Sigmoid colon (tissue), 7 donors: ENCODE measurements at regions of chr3 and their contacts with region 1.

Region 1: GRCh38 chr3:65439641-65440284 is 599.0 kb downstream of the MAGI1 start:
- DNase-seq: peak; percentile 71
- H3K4me3 ChIP-seq: no peak overlapping the region
- H3K27ac ChIP-seq: no peak overlapping the region
- H3K4me1 ChIP-seq: peaks cover 0 to 9% (median 4%) of the 10 kb centered on the region in 4 donors
- H3K27me3 ChIP-seq: no peaks in the 10 kb centered on the region
- CTCF ChIP-seq: peak; percentile 32 to 73 (median 54)
- EP300 ChIP-seq: no peak
- POLR2A ChIP-seq: no peak

Region 2: GRCh38 chr3:65672871-65673815 is 233.4 kb after region 1 on chr3:
- intact Hi-C with region 1: loop called (anchors 2 kb)
- DNase-seq: peak; percentile 71
- H3K4me3 ChIP-seq: no peak overlapping the region
- H3K27ac ChIP-seq: no peak overlapping the region
- H3K4me1 ChIP-seq: no peaks in the 10 kb centered on the region
- H3K27me3 ChIP-seq: no peaks in the 10 kb centered on the region
- CTCF ChIP-seq: peak; percentile 21 to 86 (median 56)
- EP300 ChIP-seq: no peak
- POLR2A ChIP-seq: no peak

Region 3: GRCh38 chr3:65732051-65732935 is 292.5 kb after region 1 on chr3:
- intact Hi-C with region 1: loop called (anchors 2 kb)
- DNase-seq: no peak
- H3K4me3 ChIP-seq: no peak overlapping the region
- H3K27ac ChIP-seq: no peak overlapping the region
- H3K4me1 ChIP-seq: peaks cover 0 to 18% (median 15%) of the 10 kb centered on the region in 4 donors
- H3K27me3 ChIP-seq: no peaks in the 10 kb centered on the region
- CTCF ChIP-seq: peak; percentile 48 to 77 (median 54)
- EP300 ChIP-seq: no peak
- POLR2A ChIP-seq: no peak

Region 4: GRCh38 chr3:66625505-66626216 is 1185.9 kb after region 1 on chr3:
- intact Hi-C with region 1: no loop called
- DNase-seq: no peak
- H3K4me3 ChIP-seq: no peak overlapping the region
- H3K27ac ChIP-seq: peak overlapping the region in 3 of 4 donors; percentile 42 to 59 (median 56)
- H3K4me1 ChIP-seq: peaks cover 0 to 24% (median 19%) of the 10 kb centered on the region in 4 donors
- H3K27me3 ChIP-seq: no peaks in the 10 kb centered on the region
- CTCF ChIP-seq: no peak
- EP300 ChIP-seq: no peak
- POLR2A ChIP-seq: no peak